ENCODE measurements at regions of chr17 and their contacts with region 1.

Region 1: GRCh38 chr17:28335201-28335955 is at the starts of genes IFT20 and TNFAIP1:
- DNase-seq: peak; percentile 99
- ATAC-seq: peak; percentile 97
- H3K4me3 ChIP-seq: peak within 1 kb of the TSS; percentile 92 to 94 (median 93)
- H3K27ac ChIP-seq: peak within 1 kb of the TSS; percentile 72
- H3K4me1 ChIP-seq: peaks cover 46% of the 10 kb centered on the region
- H3K27me3 ChIP-seq: no peaks in the 10 kb centered on the region; a peak in 1 of 5 replicates
- CTCF ChIP-seq: peak; percentile 49
- EP300 ChIP-seq: 0 out of 4 replicates have a peak, but pooled peaks of 1 of the 2 experiments have one; percentile 34
- POLR2A ChIP-seq: peak; percentile 42 to 87; a peak in 3 of 4 replicates
- RAD21 ChIP-seq: peak; percentile 26; the same call in 1 of the 2 replicates
- total RNA-seq, gene IFT20: 23.4 and 28.0 TPM in 2 replicates
- total RNA-seq, gene TNFAIP1: 17.5 and 18.7 TPM in 2 replicates

Region 2: GRCh38 chr17:28318759-28319660 is 16.4 kb before region 1 on chr17 and contains the start of gene TMEM97:
- CTCF ChIA-PET with region 1: no interaction called
- POLR2A ChIA-PET with region 1: interaction called, 41 read pairs
- in situ Hi-C with region 1: no loop called
- intact Hi-C with region 1: no loop called
- DNase-seq: peak; percentile 95
- ATAC-seq: peak; percentile 97
- H3K4me3 ChIP-seq: peak within 1 kb of the TSS; percentile 65 to 80 (median 76)
- H3K27ac ChIP-seq: peak within 1 kb of the TSS; percentile 69
- H3K4me1 ChIP-seq: peaks cover 62% of the 10 kb centered on the region
- H3K27me3 ChIP-seq: no peaks in the 10 kb centered on the region
- CTCF ChIP-seq: peak; percentile 51
- EP300 ChIP-seq: no peak
- POLR2A ChIP-seq: peak; percentile 80 to 88
- RAD21 ChIP-seq: peak; percentile 40; the same call in 1 of the 2 replicates
- total RNA-seq, gene TMEM97: 111 and 137 TPM in 2 replicates

Region 3: DNA sequence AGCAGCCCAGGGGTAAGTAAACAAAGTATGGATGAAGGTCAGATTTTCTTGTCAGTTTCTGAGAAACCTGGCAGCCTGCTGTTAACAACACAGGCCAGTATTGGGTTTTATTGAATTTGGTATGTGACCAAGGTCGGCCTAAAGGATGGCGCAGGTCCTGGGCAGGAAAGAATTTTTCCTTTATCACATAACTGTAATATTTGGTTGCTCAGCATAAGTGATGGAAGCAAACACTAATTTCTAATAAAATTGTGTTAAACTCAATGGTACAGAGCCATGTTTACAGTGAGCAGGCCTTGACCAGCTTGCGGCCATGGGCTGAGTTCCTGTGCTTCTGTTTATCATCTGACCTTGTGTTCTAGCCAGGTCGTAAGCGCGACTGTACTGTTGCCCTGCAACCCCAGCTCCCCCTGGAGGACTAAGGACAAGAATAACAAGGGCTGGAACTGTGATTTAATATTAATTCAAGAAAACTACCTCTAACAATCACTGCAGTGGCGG is 11.4 kb after region 1 on chr17:
- CTCF ChIA-PET with region 1: no interaction called
- POLR2A ChIA-PET with region 1: interaction called, 68 read pairs
- in situ Hi-C with region 1: no loop called
- intact Hi-C with region 1: no loop called
- DNase-seq: peak; percentile 69
- ATAC-seq: peak; percentile 86
- H3K4me3 ChIP-seq: no peak overlapping the region
- H3K27ac ChIP-seq: peak overlapping the region; percentile 43
- H3K4me1 ChIP-seq: peaks cover 26% of the 10 kb centered on the region
- H3K27me3 ChIP-seq: no peaks in the 10 kb centered on the region
- CTCF ChIP-seq: peak; percentile 84
- EP300 ChIP-seq: peak in 1 of 2 experiments; percentile 37; a peak in 2 of 4 replicates
- POLR2A ChIP-seq: no peak
- RAD21 ChIP-seq: peak; percentile 62; the same call in 1 of the 2 replicates